Heart right ventricle (tissue), 16 donors: ENCODE measurements at regions of chr1 and their contacts with region 1.

Region 1: GRCh38 chr1:161153679-161154426 is at the start of gene UFC1:
- DNase-seq: peak; percentile 70 to 87
- ATAC-seq: peak; percentile 83 to 95 (median 94)
- H3K4me3 ChIP-seq: peak within 1 kb of the TSS; percentile 60 to 91 (median 82)
- H3K27ac ChIP-seq: peak within 1 kb of the TSS; percentile 83 to 96 (median 93)
- H3K4me1 ChIP-seq: peaks cover 0 to 25% (median 15%) of the 10 kb centered on the region in 9 donors
- H3K27me3 ChIP-seq: no peaks in the 10 kb centered on the region
- CTCF ChIP-seq: no peak
- total RNA-seq, gene UFC1: 63.9 to 88.3 (median 74.9) TPM

Region 2: DNA sequence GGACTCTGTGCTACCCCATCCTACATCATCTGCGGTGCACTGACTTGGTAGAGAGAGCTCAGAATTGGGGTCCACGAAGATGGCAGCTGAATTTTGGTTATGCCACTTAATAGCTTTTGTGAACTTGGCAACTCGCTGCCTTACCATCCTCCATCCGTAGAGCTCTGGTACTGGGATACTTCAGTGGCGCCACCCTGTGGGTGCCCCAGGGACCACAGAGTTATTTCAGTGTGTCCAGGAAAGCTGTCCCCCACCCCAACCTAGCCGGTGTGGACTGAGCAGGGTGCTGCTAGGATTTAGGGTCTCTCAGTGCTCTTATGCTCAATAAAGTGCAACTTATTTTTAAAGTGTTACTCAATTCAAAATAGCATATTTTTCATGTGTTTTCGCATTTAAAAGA is 99.0 kb before region 1 on chr1:
- intact Hi-C with region 1: no loop called
- DNase-seq: no peak
- ATAC-seq: no peak
- H3K4me3 ChIP-seq: no peak overlapping the region
- H3K27ac ChIP-seq: no peak overlapping the region
- H3K4me1 ChIP-seq: peaks cover 0 to 4% (median 0%) of the 10 kb centered on the region in 9 donors
- H3K27me3 ChIP-seq: peaks cover 0 to 43% (median 17%) of the 10 kb centered on the region in 7 donors
- CTCF ChIP-seq: peak in 3 of 9 donors; percentile 17 to 27 (median 24)

Region 3: DNA sequence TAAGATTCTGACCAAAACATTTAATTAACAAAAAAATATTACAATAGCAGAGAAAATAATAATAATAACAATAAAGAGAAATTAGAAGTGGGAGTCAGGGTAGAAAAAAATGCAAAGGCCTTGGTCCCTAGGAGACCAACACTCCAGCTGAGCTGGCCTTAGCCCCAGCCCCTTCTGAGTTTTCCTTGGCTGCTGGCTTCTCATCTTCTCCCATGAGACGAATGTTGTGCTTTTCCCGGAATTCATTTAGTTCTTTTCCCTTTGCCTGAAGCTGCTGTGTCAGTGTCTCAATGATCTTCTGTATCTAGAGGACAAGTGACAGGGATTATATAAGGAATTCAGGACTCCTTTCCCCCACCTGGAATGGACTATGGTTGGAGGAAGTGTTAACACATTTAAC is 53.3 kb before region 1 on chr1:
- intact Hi-C with region 1: no loop called
- DNase-seq: peak in 1 of 2 donors; percentile 41
- ATAC-seq: no peak
- H3K4me3 ChIP-seq: no peak overlapping the region
- H3K27ac ChIP-seq: peak overlapping the region in 3 of 10 donors; percentile 6 to 44 (median 26)
- H3K4me1 ChIP-seq: peaks cover 7 to 42% (median 22%) of the 10 kb centered on the region in 9 donors
- H3K27me3 ChIP-seq: no peaks in the 10 kb centered on the region
- CTCF ChIP-seq: no peak

Region 4: GRCh38 chr1:161117759-161118581 is 35.9 kb before region 1 on chr1 and contains the starts of genes NIT1 and PFDN2:
- intact Hi-C with region 1: loop called in 1 of 10 experiments (anchors 5 kb)
- DNase-seq: peak; percentile 87 to 88
- ATAC-seq: peak; percentile 91 to 95 (median 94)
- H3K4me3 ChIP-seq: peak within 1 kb of the TSS; percentile 70 to 100 (median 94)
- H3K27ac ChIP-seq: peak within 1 kb of the TSS; percentile 73 to 97 (median 94)
- H3K4me1 ChIP-seq: peaks cover 14 to 83% (median 53%) of the 10 kb centered on the region in 9 donors
- H3K27me3 ChIP-seq: no peaks in the 10 kb centered on the region
- CTCF ChIP-seq: peak in 1 of 9 donors; percentile 17
- total RNA-seq, gene NIT1: 24.1 to 41.2 (median 33.4) TPM
- total RNA-seq, gene PFDN2: 44.6 to 78.7 (median 54.1) TPM

Region 5: GRCh38 chr1:161305867-161306519 is 152.1 kb after region 1 on chr1:
- intact Hi-C with region 1: loop called in 1 of 10 experiments (anchors 1 kb)
- DNase-seq: peak; percentile 75 to 77
- ATAC-seq: peak; percentile 85 to 94 (median 91)
- H3K4me3 ChIP-seq: peak overlapping the region; percentile 51 to 75 (median 62)
- H3K27ac ChIP-seq: peak overlapping the region in 8 of 10 donors; percentile 28 to 93 (median 62)
- H3K4me1 ChIP-seq: peaks cover 0 to 52% (median 13%) of the 10 kb centered on the region in 9 donors
- H3K27me3 ChIP-seq: peaks cover 0 to 3% (median 0%) of the 10 kb centered on the region in 7 donors
- CTCF ChIP-seq: peak in 5 of 9 donors; percentile 10 to 39 (median 31)